ENCODE measurements at regions of chr6 and their contacts with region 1.

Region 1: GRCh38 chr6:31834434-31835198 is 7.1 kb downstream of the HSPA1B start:
- DNase-seq: peak; percentile 90 to 95 (median 92)
- ATAC-seq: peak; percentile 90 to 94 (median 90)
- H3K4me3 ChIP-seq: peak overlapping the region; percentile 56 to 97 (median 86)
- H3K27ac ChIP-seq: peak overlapping the region; percentile 83 to 99 (median 96)
- H3K4me1 ChIP-seq: peaks cover 4 to 71% (median 52%) of the 10 kb centered on the region in 12 donors
- H3K27me3 ChIP-seq: no peaks in the 10 kb centered on the region
- CTCF ChIP-seq: no peak
- POLR2A ChIP-seq: peak; percentile 24 to 59

Region 2: DNA sequence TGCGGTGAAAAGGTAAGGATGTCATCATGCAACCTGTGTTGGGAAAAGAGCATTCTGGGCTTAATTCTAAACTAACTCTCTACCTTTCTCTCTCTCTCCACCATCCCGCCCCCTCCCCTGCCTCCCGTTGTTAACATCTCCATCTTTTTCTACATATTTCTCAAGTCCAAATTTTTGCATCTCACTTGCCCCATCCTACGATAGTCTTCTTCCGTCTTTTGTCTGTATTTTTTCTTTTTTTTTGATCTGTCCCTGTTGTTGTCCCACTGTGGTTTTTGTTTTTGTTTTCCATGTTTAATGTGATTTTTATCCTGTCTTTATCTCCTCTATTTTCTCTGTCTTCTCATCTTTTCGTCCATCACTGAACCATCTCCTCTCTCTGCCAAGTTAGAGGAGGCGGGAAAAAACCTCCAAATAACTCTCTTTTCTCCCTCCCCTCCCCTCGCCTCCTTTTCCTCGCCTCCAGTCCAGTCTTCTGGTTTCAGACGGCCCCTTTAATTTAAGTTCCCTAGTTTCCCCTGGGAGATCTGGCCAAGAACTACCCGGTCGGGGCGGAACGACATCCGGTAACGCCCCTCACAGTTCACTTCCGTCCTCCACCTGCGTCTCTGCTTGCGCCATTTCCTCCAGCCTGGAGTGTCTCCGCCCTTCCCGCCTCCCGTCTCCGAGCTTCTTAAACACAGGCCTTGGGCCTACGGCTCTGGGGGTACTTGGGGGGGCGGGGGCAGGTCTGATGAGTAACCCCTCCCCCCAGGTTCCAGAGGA is 287.5 kb before region 1 on chr6 and contains the start of gene NFKBIL1:
- intact Hi-C with region 1: loop called in 2 of 10 experiments (anchors 5 to 10 kb)
- DNase-seq: peak; percentile 94 to 98 (median 98)
- ATAC-seq: peak; percentile 96 to 98 (median 97)
- H3K4me3 ChIP-seq: peak within 1 kb of the TSS; percentile 4 to 64 (median 56)
- H3K27ac ChIP-seq: peak within 1 kb of the TSS; percentile 63 to 95 (median 89)
- H3K4me1 ChIP-seq: peaks cover 0 to 37% (median 22%) of the 10 kb centered on the region in 12 donors
- H3K27me3 ChIP-seq: no peaks in the 10 kb centered on the region
- CTCF ChIP-seq: peak in 2 of 12 donors; percentile 1 to 21
- POLR2A ChIP-seq: peak in 1 of 2 donors; percentile 62
- total RNA-seq, gene NFKBIL1: 10.0 to 17.8 (median 12.4) TPM

Region 3: GRCh38 chr6:31652925-31653718 is 181.5 kb before region 1 on chr6:
- intact Hi-C with region 1: no loop called
- DNase-seq: peak; percentile 87 to 92 (median 90)
- ATAC-seq: peak; percentile 73 to 83 (median 80)
- H3K4me3 ChIP-seq: peak overlapping the region; percentile 62 to 92 (median 79)
- H3K27ac ChIP-seq: peak overlapping the region; percentile 94 to 99 (median 98)
- H3K4me1 ChIP-seq: peaks cover 2 to 42% (median 26%) of the 10 kb centered on the region in 12 donors
- H3K27me3 ChIP-seq: no peaks in the 10 kb centered on the region
- CTCF ChIP-seq: peak in 3 of 12 donors; percentile 5 to 31 (median 28)
- POLR2A ChIP-seq: peak; percentile 31 to 70

Region 4: DNA sequence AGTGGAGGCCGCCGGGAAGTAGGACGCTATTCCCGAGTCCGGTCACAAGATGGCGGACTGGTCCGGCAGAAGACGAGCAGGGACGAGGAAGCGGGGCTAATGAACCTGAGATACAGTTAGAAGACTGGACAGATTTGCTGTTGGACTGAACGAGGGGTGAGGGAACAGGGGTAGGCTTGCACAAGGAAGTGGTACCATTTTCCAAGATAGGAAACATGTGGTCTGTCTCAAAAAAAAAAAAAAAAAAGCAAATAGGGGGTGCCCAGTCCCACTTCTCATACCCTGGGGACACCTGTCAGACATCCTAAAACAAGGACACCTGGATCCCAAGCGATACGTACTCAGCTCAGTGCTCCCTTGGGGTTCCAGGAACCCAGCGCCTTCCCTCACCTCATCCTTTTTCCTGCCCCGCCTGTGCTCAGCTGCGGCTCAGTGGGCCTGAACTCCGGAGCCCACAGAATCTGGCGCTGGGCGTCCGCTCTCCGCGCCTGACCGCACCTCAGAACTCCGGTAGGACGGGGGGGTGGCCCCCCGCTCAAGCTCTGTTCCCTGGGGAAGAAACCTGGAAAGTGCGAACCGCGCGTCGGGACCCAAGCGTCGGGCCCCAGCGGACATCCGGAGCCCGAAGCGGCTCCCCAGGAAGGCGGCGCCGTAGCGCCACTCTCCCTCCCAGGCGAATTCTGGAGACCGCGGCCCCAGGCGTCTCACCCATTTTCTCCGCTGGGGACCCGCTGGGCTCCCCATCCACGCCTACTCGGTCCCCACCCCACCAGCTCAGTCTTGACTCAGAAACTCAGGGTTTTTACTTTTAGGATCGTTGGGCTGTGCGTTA is 153.6 kb before region 1 on chr6 and contains the start of gene LY6G5C:
- intact Hi-C with region 1: loop called (anchors 1 to 5 kb)
- DNase-seq: peak; percentile 82 to 90 (median 85)
- ATAC-seq: peak; percentile 75 to 92 (median 88)
- H3K4me3 ChIP-seq: peak within 1 kb of the TSS; percentile 28 to 74 (median 58)
- H3K27ac ChIP-seq: peak within 1 kb of the TSS in 11 of 12 donors; percentile 9 to 83 (median 63)
- H3K4me1 ChIP-seq: peaks cover 0 to 26% (median 14%) of the 10 kb centered on the region in 12 donors
- H3K27me3 ChIP-seq: no peaks in the 10 kb centered on the region
- CTCF ChIP-seq: peak; percentile 54 to 85 (median 78)
- POLR2A ChIP-seq: no peak
- total RNA-seq, gene LY6G5C: 1.3 to 3.1 (median 2.2) TPM

Region 5: GRCh38 chr6:31729515-31729978 is 105.1 kb before region 1 on chr6:
- intact Hi-C with region 1: loop called in 4 of 10 experiments (anchors 5 to 10 kb)
- DNase-seq: peak; percentile 93 to 95 (median 93)
- ATAC-seq: peak; percentile 89 to 91 (median 89)
- H3K4me3 ChIP-seq: peak overlapping the region; percentile 52 to 95 (median 76)
- H3K27ac ChIP-seq: peak overlapping the region; percentile 70 to 99 (median 97)
- H3K4me1 ChIP-seq: peaks cover 4 to 85% (median 33%) of the 10 kb centered on the region in 12 donors
- H3K27me3 ChIP-seq: no peaks in the 10 kb centered on the region
- CTCF ChIP-seq: peak in 7 of 12 donors; percentile 36 to 76 (median 54)
- POLR2A ChIP-seq: peak in 1 of 2 donors; percentile 57

Region 6: DNA sequence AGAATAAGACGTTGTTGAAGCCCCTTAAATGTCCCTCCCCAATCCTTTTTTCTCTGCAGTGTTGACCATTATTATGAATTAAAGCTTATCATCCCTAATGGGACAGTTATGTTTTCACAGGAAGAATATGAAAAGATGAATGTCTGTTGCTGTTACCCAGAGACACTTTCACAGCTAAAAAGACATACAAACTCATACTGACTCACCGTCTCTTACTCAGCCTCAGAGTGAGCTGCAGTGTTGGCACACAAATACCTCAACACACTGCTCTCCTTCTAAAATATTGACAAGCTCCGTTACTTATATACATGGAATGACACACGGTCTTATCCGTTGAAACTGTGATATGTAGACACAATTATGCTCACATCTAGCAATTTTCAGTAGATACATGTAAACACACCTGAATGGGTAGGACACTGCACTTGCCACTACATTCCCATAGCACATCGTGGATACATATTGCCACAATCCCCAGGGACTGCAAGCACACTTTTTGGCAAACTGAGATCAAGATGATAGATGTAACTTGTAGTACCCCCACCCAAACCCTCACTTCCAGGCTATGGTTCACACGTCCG is 81.8 kb before region 1 on chr6:
- intact Hi-C with region 1: no loop called
- DNase-seq: no peak
- ATAC-seq: no peak
- H3K4me3 ChIP-seq: no peak overlapping the region
- H3K27ac ChIP-seq: no peak overlapping the region
- H3K4me1 ChIP-seq: no peaks in the 10 kb centered on the region
- H3K27me3 ChIP-seq: no peaks in the 10 kb centered on the region
- CTCF ChIP-seq: no peak
- POLR2A ChIP-seq: no peak

Region 7: DNA sequence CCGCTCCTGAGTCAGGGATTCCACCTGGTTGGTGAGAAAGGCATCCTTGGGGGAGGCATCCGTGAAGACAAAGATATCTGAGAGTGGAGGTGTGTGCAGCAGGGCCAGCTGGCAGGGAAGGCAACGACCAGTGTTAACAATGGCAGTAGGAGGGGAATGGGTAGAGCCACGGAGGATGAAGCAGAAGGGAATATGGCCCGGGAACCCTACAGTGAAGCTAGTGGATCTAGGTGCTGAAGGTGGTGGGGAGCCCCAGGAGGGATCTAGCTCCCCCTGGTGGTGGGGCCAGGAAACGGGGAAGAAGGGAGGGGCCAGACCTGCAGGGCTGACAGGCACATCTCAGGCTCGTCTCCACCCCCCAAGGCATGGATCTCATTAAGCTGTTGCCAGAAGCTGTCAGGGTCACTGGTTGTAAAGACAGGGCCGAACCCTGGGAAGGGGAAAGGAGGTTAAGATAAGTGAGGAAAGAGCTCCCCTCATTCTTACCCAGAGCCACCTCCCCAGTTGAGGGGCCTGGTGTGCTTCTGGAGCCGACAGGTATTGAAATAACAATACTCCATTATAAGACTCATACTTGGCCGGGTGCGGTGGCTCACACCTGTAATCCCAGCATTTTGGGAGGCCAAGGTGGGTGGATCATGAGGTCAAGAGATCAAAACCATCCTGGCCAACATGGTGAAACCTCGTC is 64.8 kb before region 1 on chr6:
- intact Hi-C with region 1: loop called in 8 of 10 experiments (anchors 2 to 10 kb)
- DNase-seq: peak; percentile 54 to 87 (median 67)
- ATAC-seq: peak in 3 of 4 donors; percentile 61 to 71 (median 67)
- H3K4me3 ChIP-seq: no peak overlapping the region
- H3K27ac ChIP-seq: no peak overlapping the region
- H3K4me1 ChIP-seq: peaks cover 0 to 41% (median 0%) of the 10 kb centered on the region in 12 donors
- H3K27me3 ChIP-seq: no peaks in the 10 kb centered on the region
- CTCF ChIP-seq: peak; percentile 56 to 86 (median 68)
- POLR2A ChIP-seq: no peak

Region 8: DNA sequence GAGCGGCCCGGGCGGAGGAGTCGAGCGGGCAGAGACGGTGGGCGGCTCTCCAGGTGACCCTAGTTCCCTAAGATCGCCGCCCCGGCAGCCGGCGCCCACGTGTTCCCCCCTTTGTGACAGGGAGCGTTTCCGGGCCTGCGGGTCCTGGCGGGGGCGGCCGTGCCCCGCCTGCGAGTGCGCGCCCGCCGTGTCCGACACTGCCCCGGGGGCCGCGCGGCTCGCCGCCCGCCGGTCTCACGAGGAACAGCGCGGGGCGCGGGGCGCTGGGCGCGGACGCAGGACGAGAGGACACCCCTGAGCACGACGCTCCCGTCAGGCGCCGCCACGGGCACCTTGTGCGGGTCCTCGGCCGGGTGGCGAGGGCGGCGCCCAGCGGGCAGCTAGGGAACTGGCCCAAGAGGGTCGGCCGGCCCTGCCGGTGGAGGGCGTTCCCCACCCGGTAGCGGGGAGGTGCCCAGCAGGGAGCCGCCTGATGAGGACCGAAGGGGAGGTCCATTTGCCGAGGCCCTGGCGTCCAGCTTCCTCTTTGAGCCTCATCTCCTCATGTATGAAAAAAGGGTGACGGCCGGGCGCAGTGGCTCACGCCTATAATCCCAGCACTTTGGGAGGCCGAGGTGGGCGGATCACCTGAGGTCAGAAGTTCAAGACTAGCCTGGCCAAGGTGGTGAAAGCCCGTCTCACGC is 38.9 kb before region 1 on chr6 and contains the start of gene VARS1:
- intact Hi-C with region 1: loop called in 3 of 10 experiments (anchors 2 to 5 kb)
- DNase-seq: peak; percentile 92 to 98 (median 95)
- ATAC-seq: peak; percentile 81 to 97 (median 96)
- H3K4me3 ChIP-seq: peak within 1 kb of the TSS; percentile 67 to 98 (median 84)
- H3K27ac ChIP-seq: peak within 1 kb of the TSS; percentile 87 to 99 (median 96)
- H3K4me1 ChIP-seq: peaks cover 0 to 39% (median 18%) of the 10 kb centered on the region in 12 donors
- H3K27me3 ChIP-seq: no peaks in the 10 kb centered on the region
- CTCF ChIP-seq: peak; percentile 71 to 98 (median 85)
- POLR2A ChIP-seq: peak in 1 of 2 donors; percentile 59
- total RNA-seq, gene VARS1: 18.6 to 61.8 (median 26.1) TPM

Region 9: DNA sequence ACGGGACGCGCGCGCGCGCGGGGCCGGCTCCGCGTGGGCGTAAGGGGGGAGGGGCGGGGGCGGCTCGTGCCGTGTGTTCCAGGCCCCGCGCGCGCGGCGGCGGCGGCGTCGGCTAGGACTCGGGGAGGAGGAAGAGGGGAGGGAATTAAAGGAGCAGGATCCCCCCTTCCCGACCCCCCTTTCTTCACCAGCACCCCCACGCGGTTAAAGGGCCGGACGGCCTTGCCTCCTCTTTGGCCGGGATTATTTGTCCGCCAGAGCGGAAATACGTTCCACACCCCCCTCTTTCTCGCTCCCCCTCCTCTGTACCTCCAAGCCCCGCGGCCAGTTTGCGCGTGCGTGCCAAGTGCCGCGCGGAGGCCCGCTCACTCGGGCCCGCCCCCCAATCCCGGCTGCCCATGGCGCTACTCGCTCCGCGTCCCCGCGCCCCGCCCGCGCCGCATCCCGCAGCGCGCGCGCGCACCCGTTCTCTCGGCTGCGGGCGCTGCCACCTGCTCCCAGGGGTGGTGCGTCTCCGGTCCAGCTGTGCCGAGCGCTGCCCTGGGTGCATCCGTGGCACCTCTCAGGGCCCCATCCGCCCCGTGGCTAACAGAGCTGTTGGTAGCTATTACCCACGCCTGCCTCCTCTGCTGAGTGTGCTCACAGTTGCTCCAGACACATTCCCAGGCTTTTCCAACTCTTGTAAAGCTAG is 67.5 kb after region 1 on chr6 and contains the start of gene ZBTB12:
- intact Hi-C with region 1: loop called in 1 of 10 experiments (anchors 5 kb)
- DNase-seq: peak; percentile 93 to 94 (median 93)
- ATAC-seq: peak; percentile 60 to 85 (median 82)
- H3K4me3 ChIP-seq: peak within 1 kb of the TSS; percentile 49 to 95 (median 66)
- H3K27ac ChIP-seq: peak within 1 kb of the TSS; percentile 61 to 91 (median 84)
- H3K4me1 ChIP-seq: peaks cover 0 to 41% (median 20%) of the 10 kb centered on the region in 12 donors
- H3K27me3 ChIP-seq: no peaks in the 10 kb centered on the region
- CTCF ChIP-seq: peak in 3 of 12 donors; percentile 9 to 19 (median 15)
- POLR2A ChIP-seq: peak in 1 of 2 donors; percentile 55
- total RNA-seq, gene ZBTB12: 0.99 to 4.3 (median 2.3) TPM